ENCODE measurements at regions of chr4 and their contacts with region 1.

Region 1: DNA sequence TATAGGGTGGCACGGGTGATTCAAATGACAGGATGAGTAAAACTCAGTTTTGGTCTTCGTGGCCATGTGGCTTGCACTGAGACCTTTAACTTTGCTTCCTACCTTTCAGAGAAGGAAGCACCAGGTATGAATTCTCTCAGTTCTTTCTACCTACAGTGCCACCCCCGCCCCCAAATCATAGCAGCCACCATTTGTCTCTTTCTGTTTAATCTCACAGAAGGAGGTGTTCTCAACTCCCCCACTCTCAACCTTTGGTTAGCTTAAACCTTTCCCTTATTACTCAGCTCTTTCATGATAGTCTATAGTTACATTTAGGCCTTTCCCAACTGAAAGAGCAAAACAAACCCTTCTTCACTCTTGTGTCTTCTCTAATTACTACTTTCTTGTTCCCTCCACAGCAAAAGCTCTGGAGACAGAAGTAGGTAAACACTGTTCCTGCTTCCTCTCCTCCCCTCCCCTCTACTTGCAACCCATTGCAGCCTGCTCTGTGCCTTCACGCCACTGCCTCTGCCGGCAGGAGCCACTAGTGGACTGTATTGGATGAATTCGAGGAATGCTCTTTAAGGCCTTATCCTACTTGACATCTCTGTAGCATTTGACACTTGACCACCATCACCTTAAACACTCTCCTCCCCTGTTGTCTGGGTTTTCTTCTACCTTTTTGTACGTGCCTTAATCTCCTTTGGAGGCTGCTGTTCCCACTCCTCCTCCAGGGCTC is 123.7 kb downstream of the AFF1 start:
- DNase-seq: no peak
- CTCF ChIP-seq: no peak

Region 2: DNA sequence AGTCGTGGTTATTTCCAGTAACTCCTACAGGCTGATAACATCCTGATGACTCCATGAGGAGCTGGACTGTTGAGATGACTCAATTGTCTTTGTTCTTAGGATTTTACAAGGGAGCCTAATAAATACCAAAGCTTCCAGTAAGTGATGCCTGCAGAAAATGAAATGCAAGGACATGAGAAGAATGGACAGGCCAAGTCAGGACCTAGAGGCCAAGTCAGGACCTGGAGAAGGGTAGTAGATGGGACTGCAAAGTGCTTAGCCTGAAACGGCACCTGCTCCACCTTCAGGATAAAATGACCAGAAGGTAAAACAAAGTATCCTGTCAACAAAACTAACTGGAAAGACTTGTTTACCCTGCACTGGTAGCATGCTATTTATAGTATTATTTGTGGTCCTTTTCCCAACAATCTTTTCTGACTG is 202.9 kb before region 1 on chr4:
- CTCF ChIA-PET with region 1: no interaction called
- POLR2A ChIA-PET with region 1: no interaction called
- DNase-seq: no peak
- CTCF ChIP-seq: no peak

Region 3: GRCh38 chr4:87032884-87033533 is 25.5 kb before region 1 on chr4:
- CTCF ChIA-PET with region 1: interaction called, 11 read pairs
- POLR2A ChIA-PET with region 1: no interaction called
- DNase-seq: no peak
- CTCF ChIP-seq: no peak